Sigmoid colon (tissue), 7 donors: ENCODE measurements at regions of chr1 and their contacts with region 1.

Region 1: GRCh38 chr1:113389953-113390834 is at the start of gene MAGI3:
- DNase-seq: peak; percentile 99
- H3K4me3 ChIP-seq: peak within 1 kb of the TSS; percentile 87 to 98 (median 97)
- H3K27ac ChIP-seq: peak within 1 kb of the TSS; percentile 87 to 94 (median 92)
- H3K4me1 ChIP-seq: peaks cover 0 to 42% (median 25%) of the 10 kb centered on the region in 4 donors
- H3K27me3 ChIP-seq: no peaks in the 10 kb centered on the region
- CTCF ChIP-seq: no peak
- EP300 ChIP-seq: no peak
- POLR2A ChIP-seq: peak; percentile 60 to 77
- total RNA-seq, gene MAGI3: 18.9 to 22.5 (median 21.8) TPM

Region 2: DNA sequence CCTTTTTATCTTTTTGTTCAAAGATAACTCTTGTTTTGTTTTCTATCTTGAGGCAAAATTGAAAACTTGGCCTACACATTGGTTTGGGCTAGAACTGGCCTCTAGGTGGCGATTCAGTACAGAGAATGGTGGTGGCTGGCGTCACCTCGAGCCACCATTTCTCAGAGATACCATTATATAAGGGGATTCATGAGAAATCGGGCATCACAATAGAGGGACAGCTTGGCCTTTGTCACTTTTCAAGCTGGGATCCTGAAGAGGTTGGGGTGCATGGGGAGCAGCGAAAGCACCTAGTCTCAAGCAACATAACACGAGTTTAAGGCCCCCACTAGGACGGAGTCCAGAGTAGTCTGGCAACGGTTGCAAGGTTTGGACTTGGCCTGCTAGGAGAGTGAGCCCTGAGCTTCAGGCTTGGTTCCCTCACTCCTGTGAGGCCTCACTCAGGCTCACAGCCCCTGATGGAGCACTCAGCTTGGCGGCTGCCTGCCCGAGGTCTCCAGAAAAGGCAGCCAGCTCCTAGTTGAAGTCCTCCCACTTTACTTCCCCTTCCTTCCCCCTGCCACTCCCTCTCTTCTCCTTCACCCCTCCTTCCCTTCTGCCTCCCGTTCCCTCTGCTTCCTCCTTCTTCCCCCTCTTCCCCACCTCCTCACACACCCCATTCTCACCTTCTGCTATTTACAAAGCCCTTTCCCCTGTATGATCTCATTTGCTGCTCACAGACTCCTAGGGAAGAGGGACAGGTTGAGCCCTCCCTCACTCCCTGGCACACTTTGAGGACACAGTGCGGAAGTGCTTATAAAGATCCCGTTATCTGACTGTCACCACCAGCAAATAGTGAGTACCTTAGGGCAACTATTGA is 249.4 kb before region 1 on chr1:
- intact Hi-C with region 1: loop called (anchors 10 kb)
- DNase-seq: peak; percentile 80
- H3K4me3 ChIP-seq: peak overlapping the region in 2 of 4 donors; percentile 2 to 12
- H3K27ac ChIP-seq: no peak overlapping the region
- H3K4me1 ChIP-seq: peaks cover 0 to 42% (median 24%) of the 10 kb centered on the region in 4 donors
- H3K27me3 ChIP-seq: no peaks in the 10 kb centered on the region
- CTCF ChIP-seq: peak; percentile 73 to 82 (median 76)
- EP300 ChIP-seq: no peak
- POLR2A ChIP-seq: no peak

Region 3: GRCh38 chr1:113677250-113678158 is 287.3 kb after region 1 on chr1:
- intact Hi-C with region 1: loop called (anchors 5 kb)
- DNase-seq: no peak
- H3K4me3 ChIP-seq: no peak overlapping the region
- H3K27ac ChIP-seq: no peak overlapping the region
- H3K4me1 ChIP-seq: peaks cover 0 to 12% (median 5%) of the 10 kb centered on the region in 4 donors
- H3K27me3 ChIP-seq: no peaks in the 10 kb centered on the region
- CTCF ChIP-seq: peak in 3 of 4 experiments; percentile 34 to 60 (median 50)
- EP300 ChIP-seq: no peak
- POLR2A ChIP-seq: no peak

Region 4: GRCh38 chr1:113904674-113905434 is 514.7 kb after region 1 on chr1 and contains the starts of genes AP4B1 and DCLRE1B:
- intact Hi-C with region 1: loop called (anchors 10 kb)
- DNase-seq: peak; percentile 100
- H3K4me3 ChIP-seq: peak within 1 kb of the TSS; percentile 67 to 81 (median 73)
- H3K27ac ChIP-seq: peak within 1 kb of the TSS; percentile 87 to 95 (median 92)
- H3K4me1 ChIP-seq: peaks cover 0 to 23% (median 21%) of the 10 kb centered on the region in 4 donors
- H3K27me3 ChIP-seq: no peaks in the 10 kb centered on the region
- CTCF ChIP-seq: peak; percentile 64 to 82 (median 77)
- EP300 ChIP-seq: peak in 2 of 4 donors; percentile 30 to 51
- POLR2A ChIP-seq: peak; percentile 55 to 74
- total RNA-seq, gene AP4B1: 6.2 to 15.5 (median 10.8) TPM
- total RNA-seq, gene DCLRE1B: 4.3 to 4.9 (median 4.4) TPM

Region 5: GRCh38 chr1:113928941-113929749 is 539.0 kb after region 1 on chr1 and contains the start of gene HIPK1:
- intact Hi-C with region 1: loop called (anchors 2 kb)
- DNase-seq: peak; percentile 95
- H3K4me3 ChIP-seq: peak within 1 kb of the TSS; percentile 70 to 92 (median 85)
- H3K27ac ChIP-seq: peak within 1 kb of the TSS; percentile 94 to 99 (median 97)
- H3K4me1 ChIP-seq: peaks cover 0 to 51% (median 39%) of the 10 kb centered on the region in 4 donors
- H3K27me3 ChIP-seq: no peaks in the 10 kb centered on the region
- CTCF ChIP-seq: peak in 1 of 4 experiments; percentile 17
- EP300 ChIP-seq: no peak
- POLR2A ChIP-seq: peak; percentile 45 to 63
- total RNA-seq, gene HIPK1: 47.2 to 57.1 (median 49.9) TPM